Right ventricle myocardium inferior (tissue), 1 donor: ENCODE measurements at regions of chr2 and their contacts with region 1.

Region 1: GRCh38 chr2:187447336-187447735 is 716 bp downstream of the CALCRL start:
- DNase-seq: no peak
- ATAC-seq: no peak

Region 2: DNA sequence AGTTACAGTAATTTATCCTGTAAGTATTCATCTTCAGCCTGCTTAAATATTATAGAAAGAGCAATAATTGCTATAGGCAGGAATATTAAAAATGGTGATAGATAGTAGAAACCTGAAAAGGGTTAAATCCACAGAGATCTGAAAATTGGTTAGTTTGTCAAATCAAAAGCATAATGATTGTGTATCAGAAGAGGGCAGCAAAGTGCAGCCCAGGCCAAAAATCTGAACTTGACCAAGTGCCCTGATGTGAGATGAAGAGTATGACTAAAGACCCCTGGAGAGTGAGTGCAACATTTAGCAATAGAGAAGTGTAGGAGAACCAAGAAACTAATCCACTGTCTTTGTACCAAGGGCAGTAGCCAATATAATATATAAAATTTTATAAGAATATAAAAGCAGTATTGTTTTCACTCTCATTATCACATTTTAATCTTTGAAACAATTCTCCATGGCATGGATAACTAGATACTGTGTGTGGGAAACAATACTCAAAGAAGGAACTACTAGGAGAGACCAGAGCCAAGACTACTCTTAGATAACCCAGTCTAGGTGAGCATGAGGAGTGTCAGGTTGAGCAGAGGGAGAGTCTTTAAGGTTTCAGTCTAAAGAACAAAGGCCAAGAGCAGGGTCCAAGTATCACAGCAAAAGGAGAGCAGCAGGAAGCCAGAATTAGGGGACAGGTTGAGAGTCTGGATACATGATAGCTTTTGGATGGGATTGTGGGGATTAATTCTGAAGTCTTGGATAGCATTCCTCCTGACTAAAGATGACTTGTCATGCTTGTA is 148.0 kb before region 1 on chr2:
- intact Hi-C with region 1: loop called (anchors 2 kb)
- DNase-seq: no peak
- ATAC-seq: peak; percentile 42

Region 3: GRCh38 chr2:187403568-187404260 is 43.6 kb before region 1 on chr2:
- intact Hi-C with region 1: loop called (anchors 5 kb)
- DNase-seq: no peak
- ATAC-seq: peak; percentile 71

Region 4: DNA sequence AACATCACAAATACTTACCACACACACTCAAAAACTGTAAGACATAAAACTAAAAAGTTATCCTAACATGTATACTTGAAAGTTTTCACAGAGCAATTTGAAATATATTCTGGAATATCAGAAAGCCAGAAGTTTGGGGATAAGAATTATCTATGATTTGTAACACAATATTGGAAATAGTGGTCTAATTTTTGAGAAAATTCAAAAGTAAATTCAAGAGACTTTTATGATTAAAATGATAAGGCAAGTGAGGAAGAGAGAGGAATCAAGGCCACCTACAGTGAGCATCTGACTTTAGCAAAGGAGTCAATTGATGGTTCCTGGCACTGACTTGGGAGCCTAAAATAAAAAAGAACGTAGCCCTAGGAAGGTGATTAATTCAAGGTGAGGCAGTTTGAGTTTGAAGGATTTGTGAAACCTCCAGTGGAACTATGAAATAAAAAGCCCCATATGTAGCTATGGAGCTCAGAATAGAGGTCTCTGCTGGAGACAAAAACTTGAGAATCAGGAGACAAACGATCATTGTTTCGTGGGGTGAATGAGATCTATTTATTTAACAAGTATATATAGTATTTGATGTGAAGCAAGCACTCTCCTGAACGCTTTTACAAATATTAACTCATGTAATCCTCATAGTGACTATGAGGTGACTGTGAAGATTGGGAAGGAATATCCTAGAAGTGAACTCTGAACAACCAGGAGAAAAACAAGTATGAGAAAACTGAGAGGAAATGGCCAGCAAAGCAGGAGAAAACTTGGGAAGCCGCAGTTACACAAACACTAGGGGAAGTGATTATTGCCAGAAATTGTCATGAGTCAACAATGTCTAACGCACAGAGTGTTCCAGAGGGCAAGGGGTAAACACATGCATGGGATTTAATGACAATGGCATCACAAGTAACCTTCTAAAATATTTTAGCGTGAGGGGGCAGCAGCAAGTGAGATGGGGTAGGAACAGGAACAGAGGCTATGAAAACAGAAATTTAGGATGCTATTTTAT is 94.0 kb after region 1 on chr2:
- intact Hi-C with region 1: no loop called
- DNase-seq: no peak
- ATAC-seq: peak; percentile 89